Transverse colon (tissue), 4 donors: ENCODE measurements at regions of chr5 and their contacts with region 1.

Region 1: GRCh38 chr5:80141147-80141671 is 106.1 kb downstream of the THBS4 start:
- DNase-seq: peak; percentile 70
- H3K4me3 ChIP-seq: no peak overlapping the region
- H3K27ac ChIP-seq: peak overlapping the region; percentile 72 to 90 (median 80)
- H3K4me1 ChIP-seq: peaks cover 7 to 40% (median 11%) of the 10 kb centered on the region in 4 donors
- H3K27me3 ChIP-seq: no peaks in the 10 kb centered on the region
- CTCF ChIP-seq: no peak
- EP300 ChIP-seq: peak; percentile 30
- POLR2A ChIP-seq: no peak

Region 2: GRCh38 chr5:79297661-79298060 is 843.5 kb before region 1 on chr5:
- in situ Hi-C with region 1: no loop called
- intact Hi-C with region 1: loop called (anchors 10 kb)
- DNase-seq: no peak
- H3K4me3 ChIP-seq: no peak overlapping the region
- H3K27ac ChIP-seq: no peak overlapping the region
- H3K4me1 ChIP-seq: no peaks in the 10 kb centered on the region
- H3K27me3 ChIP-seq: no peaks in the 10 kb centered on the region
- CTCF ChIP-seq: no peak
- EP300 ChIP-seq: no peak
- POLR2A ChIP-seq: no peak

Region 3: GRCh38 chr5:80192507-80193241 is 51.5 kb after region 1 on chr5:
- in situ Hi-C with region 1: no loop called
- intact Hi-C with region 1: no loop called
- DNase-seq: no peak
- H3K4me3 ChIP-seq: no peak overlapping the region
- H3K27ac ChIP-seq: peak overlapping the region; percentile 31 to 69 (median 54)
- H3K4me1 ChIP-seq: peaks cover 17 to 55% (median 34%) of the 10 kb centered on the region in 4 donors
- H3K27me3 ChIP-seq: no peaks in the 10 kb centered on the region
- CTCF ChIP-seq: no peak
- EP300 ChIP-seq: no peak
- POLR2A ChIP-seq: no peak

Region 4: DNA sequence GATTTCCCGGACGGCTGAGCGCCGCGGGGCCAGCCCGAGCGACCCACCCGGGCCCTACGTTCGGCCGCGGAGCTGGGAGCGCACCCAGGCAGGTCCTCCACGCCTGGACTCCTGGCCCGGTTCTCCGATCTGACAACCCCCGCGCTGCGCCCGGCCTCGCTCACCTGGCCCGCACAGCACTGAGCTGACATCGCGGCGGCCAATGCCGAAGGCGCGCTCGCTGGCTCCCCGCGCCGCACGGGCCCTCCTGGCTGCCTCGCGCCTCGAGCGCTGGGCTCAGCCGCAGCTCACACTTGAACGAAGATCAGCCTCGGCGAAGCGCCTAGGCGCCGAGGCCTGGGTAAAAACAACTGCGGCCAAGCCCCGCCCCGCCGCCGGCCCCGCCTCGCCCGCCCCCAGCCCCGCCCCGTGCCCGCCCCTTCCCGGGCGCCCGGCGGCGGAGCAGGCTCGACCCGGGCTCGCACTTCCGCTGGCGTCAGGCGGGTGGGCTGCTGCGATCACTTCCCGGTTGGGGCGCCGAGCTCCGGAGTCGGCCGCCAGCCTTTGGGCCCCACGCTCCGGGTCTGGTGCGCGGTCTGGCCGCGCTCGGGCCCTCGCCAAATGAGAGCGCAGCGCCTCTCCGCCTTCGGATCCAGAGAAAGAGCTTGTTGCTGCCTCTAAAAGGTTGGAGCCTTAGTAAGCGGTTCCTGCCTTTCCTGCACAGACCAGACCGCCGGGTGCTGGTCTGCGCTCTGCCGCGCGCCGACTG is 114.7 kb after region 1 on chr5 and contains the start of gene SERINC5:
- in situ Hi-C with region 1: no loop called
- intact Hi-C with region 1: loop called (anchors 5 kb)
- DNase-seq: peak; percentile 89
- H3K4me3 ChIP-seq: peak within 1 kb of the TSS; percentile 58 to 95 (median 77)
- H3K27ac ChIP-seq: peak within 1 kb of the TSS; percentile 97 to 100 (median 100)
- H3K4me1 ChIP-seq: peaks cover 1 to 56% (median 36%) of the 10 kb centered on the region in 4 donors
- H3K27me3 ChIP-seq: no peaks in the 10 kb centered on the region
- CTCF ChIP-seq: no peak
- EP300 ChIP-seq: peak; percentile 10
- POLR2A ChIP-seq: peak; percentile 97
- total RNA-seq, gene SERINC5: 40.6 to 90.4 (median 79.6) TPM